ENCODE measurements at regions of chr1 and their contacts with region 1.

Region 1: GRCh38 chr1:212994926-212995325 is 20.7 kb downstream of the ANGEL2 start:
- DNase-seq: no peak
- H3K4me3 ChIP-seq: no peak overlapping the region
- H3K27ac ChIP-seq: no peak overlapping the region
- H3K27me3 ChIP-seq: no peaks in the 10 kb centered on the region
- CTCF ChIP-seq: no peak

Region 2: GRCh38 chr1:212782422-212783154 is 212.3 kb before region 1 on chr1:
- CTCF ChIA-PET with region 1: interaction called, 14 read pairs
- POLR2A ChIA-PET with region 1: no interaction called
- DNase-seq: no peak
- H3K4me3 ChIP-seq: no peak overlapping the region
- H3K27ac ChIP-seq: no peak overlapping the region
- H3K27me3 ChIP-seq: no peaks in the 10 kb centered on the region
- CTCF ChIP-seq: peak; percentile 65

Region 3: GRCh38 chr1:212791676-212792395 is 203.1 kb before region 1 on chr1 and contains the starts of genes NSL1 and TATDN3:
- CTCF ChIA-PET with region 1: interaction called, 20 read pairs
- POLR2A ChIA-PET with region 1: no interaction called
- DNase-seq: peak; percentile 85
- H3K4me3 ChIP-seq: peak within 1 kb of the TSS; percentile 98
- H3K27ac ChIP-seq: peak within 1 kb of the TSS; percentile 84
- H3K27me3 ChIP-seq: no peaks in the 10 kb centered on the region
- CTCF ChIP-seq: no peak
- polyA plus RNA-seq, gene NSL1: 26.7 and 33.8 TPM in 2 replicates
- polyA plus RNA-seq, gene TATDN3: 12.4 and 16.3 TPM in 2 replicates

Region 4: DNA sequence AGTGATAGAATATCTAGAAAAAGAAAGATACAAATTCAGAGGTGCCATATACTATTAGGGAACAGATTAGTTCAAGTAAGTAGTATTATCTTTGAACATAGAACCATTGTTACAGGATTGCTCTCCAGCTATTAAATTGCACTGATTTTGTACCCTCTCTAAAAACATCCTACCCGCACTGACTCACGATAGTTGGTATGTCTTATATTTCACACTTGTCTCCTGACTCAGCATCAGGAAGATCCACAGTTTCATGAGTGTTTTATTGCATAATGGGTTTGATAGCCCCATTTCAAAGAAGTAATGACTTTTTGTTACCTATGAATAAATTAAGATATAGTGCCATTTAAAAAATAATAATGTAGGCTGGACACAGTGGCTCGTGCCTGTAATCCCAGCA is 197.2 kb before region 1 on chr1:
- CTCF ChIA-PET with region 1: interaction called, 20 read pairs
- POLR2A ChIA-PET with region 1: no interaction called
- DNase-seq: no peak
- H3K4me3 ChIP-seq: no peak overlapping the region
- H3K27ac ChIP-seq: no peak overlapping the region
- H3K27me3 ChIP-seq: no peaks in the 10 kb centered on the region
- CTCF ChIP-seq: no peak

Region 5: DNA sequence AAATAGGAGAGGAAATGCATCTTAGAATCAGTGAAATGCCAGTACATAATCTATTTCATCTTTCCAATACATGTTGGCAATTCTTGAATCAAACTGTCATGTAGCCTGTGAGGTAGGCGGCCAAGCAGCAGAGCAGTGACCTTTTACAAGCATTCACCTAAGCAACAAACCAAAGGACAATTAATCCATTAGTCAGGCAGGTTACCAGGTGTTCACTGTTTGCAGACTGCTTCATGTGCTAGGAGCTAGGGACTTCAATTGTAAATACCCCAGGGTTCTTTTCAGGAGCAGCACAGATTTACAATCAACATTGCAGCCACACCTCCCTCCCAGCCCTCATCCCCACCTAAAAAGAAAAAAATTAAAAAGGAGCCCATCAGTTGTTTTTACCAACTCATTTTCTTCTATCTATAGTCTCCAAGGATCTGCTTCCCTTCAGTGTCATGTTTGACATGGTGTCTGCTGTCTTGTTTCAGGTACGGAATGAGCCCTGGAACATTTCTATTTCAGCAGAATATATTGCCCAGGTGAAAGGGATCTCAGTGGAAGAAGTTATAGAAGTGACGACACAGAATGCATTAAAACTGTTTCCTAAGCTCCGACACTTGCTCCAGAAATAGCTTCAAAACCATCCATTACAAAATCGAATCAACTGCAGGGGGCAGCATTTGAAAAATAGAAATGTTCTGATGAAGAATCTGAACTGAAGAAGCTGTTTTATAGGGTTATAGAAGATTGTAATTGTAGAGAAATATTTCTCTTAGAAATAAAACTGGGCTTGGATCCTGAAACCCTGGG is 180.2 kb before region 1 on chr1:
- CTCF ChIA-PET with region 1: interaction called, 50 read pairs
- POLR2A ChIA-PET with region 1: interaction called, 3 read pairs
- DNase-seq: no peak
- H3K4me3 ChIP-seq: no peak overlapping the region
- H3K27ac ChIP-seq: no peak overlapping the region
- H3K27me3 ChIP-seq: no peaks in the 10 kb centered on the region
- CTCF ChIP-seq: 0 out of 2 replicates have a peak, but pooled peaks have one; percentile 28

Region 6: GRCh38 chr1:212967801-212968200 is 27.1 kb before region 1 on chr1:
- CTCF ChIA-PET with region 1: interaction called, 22 read pairs
- POLR2A ChIA-PET with region 1: no interaction called
- DNase-seq: no peak
- H3K4me3 ChIP-seq: no peak overlapping the region
- H3K27ac ChIP-seq: no peak overlapping the region
- H3K27me3 ChIP-seq: no peaks in the 10 kb centered on the region
- CTCF ChIP-seq: peak; percentile 78

Region 7: DNA sequence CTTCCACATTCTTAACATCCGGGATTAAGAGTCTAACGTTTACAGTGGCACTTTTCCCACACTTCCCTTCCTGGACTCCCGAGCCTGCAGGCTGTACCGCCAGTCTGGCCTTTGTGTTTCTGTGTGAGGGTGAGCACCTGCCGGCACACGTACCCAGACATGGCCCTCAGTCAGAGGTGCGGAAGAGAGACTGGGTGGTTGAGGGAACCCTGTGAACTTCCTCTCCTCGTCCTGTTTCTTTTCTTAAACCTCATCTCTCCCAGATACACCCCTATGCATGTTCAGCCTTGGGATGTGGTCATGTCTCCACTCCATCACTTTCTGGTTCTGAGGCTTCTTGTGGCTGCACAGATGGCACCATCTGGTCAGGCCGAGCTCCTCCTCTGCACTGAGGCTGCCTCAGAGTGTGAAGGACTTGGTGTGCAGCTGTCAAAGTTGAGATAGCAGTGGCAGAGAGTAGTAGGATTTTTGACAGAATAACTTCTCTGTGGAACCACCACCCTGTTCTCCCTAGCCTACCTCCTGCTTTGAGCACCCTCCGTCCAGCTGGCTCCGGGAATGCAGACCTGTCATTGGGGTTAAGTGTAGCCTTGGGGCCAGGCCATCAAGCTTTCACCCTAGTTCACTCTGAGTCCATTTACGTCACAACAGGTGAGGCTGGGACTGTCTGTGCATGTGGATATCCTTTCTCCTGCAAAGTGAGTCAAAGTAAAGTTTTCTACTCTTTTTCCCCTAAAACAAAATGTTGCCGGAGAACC is 13.2 kb before region 1 on chr1:
- CTCF ChIA-PET with region 1: interaction called, 20 read pairs
- POLR2A ChIA-PET with region 1: no interaction called
- DNase-seq: no peak
- H3K4me3 ChIP-seq: no peak overlapping the region
- H3K27ac ChIP-seq: no peak overlapping the region
- H3K27me3 ChIP-seq: no peaks in the 10 kb centered on the region
- CTCF ChIP-seq: no peak

Region 8: DNA sequence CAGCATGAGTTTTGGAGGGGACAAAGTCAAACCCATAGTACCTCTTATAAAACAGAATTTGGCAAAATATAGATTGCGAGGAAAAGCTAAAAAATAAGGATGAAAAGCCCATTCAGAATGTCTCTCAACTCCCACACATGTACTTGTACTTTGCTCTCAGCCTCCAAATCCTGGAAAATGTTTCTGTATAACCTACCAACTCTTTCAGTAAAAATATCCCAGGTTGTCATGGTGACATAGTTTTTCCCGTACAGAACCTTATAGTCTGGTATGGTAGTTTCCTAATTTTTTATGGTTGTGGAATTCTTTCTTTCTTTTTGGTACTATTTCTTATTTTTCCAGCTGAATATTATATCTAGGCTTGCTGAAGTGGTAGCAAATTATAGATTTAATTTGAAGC is 40.6 kb after region 1 on chr1:
- CTCF ChIA-PET with region 1: no interaction called
- POLR2A ChIA-PET with region 1: no interaction called
- DNase-seq: no peak
- H3K4me3 ChIP-seq: no peak overlapping the region
- H3K27ac ChIP-seq: no peak overlapping the region
- H3K27me3 ChIP-seq: peaks cover 7% of the 10 kb centered on the region
- CTCF ChIP-seq: no peak

Region 9: DNA sequence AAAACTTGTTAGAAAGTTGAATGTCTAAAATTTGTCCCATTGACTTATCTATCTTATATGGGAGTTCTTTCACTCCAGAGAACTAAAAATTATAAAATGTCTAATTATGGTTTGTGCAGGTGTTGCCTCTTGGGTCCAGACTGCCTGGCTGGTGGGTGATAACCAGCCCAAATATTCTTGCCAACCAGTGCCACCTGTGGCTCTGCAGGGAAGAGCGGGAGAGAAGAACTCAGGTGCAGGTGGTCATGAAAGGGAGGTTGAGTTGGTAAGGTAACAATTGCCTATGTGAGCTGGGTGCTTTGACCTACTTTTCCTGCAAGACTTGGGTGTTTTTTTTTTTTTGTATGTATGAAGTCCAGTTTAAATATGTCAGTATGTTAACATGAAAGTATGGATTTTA is 66.3 kb after region 1 on chr1:
- CTCF ChIA-PET with region 1: no interaction called
- POLR2A ChIA-PET with region 1: no interaction called
- DNase-seq: no peak
- H3K4me3 ChIP-seq: no peak overlapping the region
- H3K27ac ChIP-seq: no peak overlapping the region
- H3K27me3 ChIP-seq: no peaks in the 10 kb centered on the region
- CTCF ChIP-seq: no peak

Measured in AG04450 (cell line).